ENCODE measurements at regions of chr1 and their contacts with region 1.

Region 1: DNA sequence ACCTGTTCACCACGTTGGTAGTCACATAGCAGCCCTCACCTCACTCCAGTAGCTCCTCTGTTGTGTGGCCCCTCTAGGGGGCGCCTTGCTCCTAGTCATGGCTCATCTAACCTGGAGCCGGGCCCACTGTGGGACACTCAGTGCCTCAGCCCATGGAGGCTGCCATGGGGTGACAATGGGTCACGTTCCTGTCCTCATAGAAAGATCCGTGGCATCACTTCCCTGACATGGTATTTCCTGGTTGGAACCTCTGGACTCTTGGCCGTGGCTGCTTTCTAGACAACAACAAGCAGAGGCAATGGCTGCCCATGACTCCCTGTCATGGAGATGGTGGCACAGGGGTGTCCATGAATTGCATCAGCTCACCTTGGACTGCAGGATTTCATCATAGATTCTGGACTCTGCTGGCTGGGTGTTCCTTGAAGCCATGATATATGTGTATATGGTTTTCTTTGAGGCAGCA is 27.5 kb upstream of the SLAMF6 start:
- DNase-seq: peak; percentile 83
- ATAC-seq: peak; percentile 93
- H3K4me3 Mint-ChIP-seq: no peak overlapping the region
- H3K27ac Mint-ChIP-seq: peak overlapping the region; percentile 48
- H3K4me1 Mint-ChIP-seq: peaks cover 7% of the 10 kb centered on the region
- H3K27me3 Mint-ChIP-seq: no peaks in the 10 kb centered on the region

Region 2: DNA sequence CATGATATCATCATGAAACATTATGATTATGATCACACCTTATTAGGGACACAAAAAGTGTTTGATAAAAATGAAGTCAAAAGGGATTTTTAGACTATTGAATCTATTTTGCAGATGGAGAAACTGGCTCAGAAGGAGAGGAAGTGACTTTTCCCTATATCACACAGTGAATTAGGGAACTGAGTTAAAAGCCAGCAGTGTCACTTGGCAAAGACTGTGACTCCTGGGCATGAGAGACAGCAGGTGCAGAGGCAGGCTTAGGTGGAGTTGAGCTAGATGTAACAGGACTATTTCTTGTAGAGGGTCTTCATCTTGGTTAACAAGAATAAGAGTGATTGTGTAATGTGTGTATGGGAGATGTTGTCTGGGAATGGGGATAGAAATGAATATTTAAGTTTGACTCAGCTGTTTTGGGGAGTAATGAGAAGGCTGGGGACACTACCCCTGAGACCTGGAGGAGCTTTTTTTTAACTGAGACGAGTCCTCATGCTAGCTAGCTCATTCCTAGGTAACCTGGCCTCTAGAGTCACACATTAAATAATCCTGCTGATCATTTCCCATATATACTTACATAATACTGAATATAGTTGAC is 29.7 kb after region 1 on chr1:
- CTCF ChIA-PET with region 1: interaction called, 6 read pairs
- POLR2A ChIA-PET with region 1: no interaction called
- intact Hi-C with region 1: loop called (anchors 1 to 2 kb)
- DNase-seq: no peak
- ATAC-seq: no peak
- H3K4me3 Mint-ChIP-seq: peak overlapping the region; percentile 8
- H3K27ac Mint-ChIP-seq: peak overlapping the region; percentile 82
- H3K4me1 Mint-ChIP-seq: peaks cover 75% of the 10 kb centered on the region
- H3K27me3 Mint-ChIP-seq: no peaks in the 10 kb centered on the region